ENCODE measurements at regions of chr5 and their contacts with region 1.

Region 1: DNA sequence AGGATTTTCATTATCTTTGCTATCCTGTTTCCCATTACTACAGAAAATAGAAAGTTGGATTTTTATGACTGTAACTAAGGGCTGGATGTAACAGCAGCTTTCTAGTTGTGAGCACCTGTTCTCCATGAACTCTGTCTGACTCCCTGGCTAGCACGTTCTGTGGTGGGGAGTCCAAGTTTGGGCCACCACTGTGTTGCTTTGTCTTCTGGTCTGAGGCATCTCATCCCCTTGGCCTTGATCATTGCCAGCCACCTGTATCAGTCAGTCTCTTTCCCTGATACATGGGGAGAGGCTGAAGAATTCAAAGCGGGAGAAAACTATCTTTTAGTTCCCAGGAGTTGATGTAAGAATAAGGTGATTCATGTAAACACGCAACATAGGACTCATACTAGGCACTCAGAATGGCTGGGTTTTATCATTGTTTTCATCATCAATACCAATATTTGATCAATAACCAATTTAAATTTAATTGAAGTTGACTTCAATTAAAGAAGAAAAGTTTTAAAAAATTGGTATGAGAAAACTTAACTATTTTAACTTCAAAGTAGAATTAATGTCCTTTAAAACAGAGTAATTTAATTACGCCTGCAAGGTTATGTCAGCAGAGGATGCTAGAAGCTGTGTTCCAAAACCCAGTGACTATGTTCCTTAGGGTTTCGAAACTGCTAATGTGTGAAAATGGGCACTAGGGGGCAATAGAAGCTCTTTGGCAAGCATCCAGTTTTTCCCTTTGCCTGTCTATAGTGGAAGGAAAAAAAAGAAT is 33.6 kb downstream of the WDR70 start:
- DNase-seq: peak; percentile 42
- H3K4me3 Mint-ChIP-seq: no peak overlapping the region
- H3K27ac Mint-ChIP-seq: no peak overlapping the region
- H3K4me1 Mint-ChIP-seq: no peaks in the 10 kb centered on the region
- H3K27me3 Mint-ChIP-seq: no peaks in the 10 kb centered on the region

Region 2: GRCh38 chr5:37424441-37424840 is 11.7 kb after region 1 on chr5:
- CTCF ChIA-PET with region 1: interaction called, 20 read pairs
- POLR2A ChIA-PET with region 1: interaction called, 3 read pairs
- intact Hi-C with region 1: no loop called
- DNase-seq: no peak
- H3K4me3 Mint-ChIP-seq: no peak overlapping the region
- H3K27ac Mint-ChIP-seq: no peak overlapping the region
- H3K4me1 Mint-ChIP-seq: peaks cover 3% of the 10 kb centered on the region
- H3K27me3 Mint-ChIP-seq: no peaks in the 10 kb centered on the region

Region 3: DNA sequence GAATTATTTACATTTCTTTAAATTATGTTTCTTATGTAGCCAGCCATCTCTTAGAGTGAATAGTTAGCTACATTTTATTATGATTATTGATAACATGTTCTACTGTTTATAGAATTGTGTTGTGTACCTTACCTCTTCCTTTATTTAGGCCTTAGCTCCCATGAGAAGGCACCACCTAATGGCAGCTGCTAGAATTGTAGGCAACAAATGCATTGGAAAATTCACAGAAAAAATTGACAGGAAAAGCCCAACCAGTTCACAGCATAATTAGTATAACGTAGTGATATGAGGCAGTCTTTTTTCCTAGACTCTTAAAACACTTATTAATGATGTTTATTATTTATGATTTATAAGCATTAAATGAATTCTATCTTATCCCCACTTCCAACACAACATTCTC is 142.2 kb after region 1 on chr5:
- CTCF ChIA-PET with region 1: interaction called, 8 read pairs
- POLR2A ChIA-PET with region 1: no interaction called
- intact Hi-C with region 1: loop called (anchors 1 kb)
- DNase-seq: no peak
- H3K4me3 Mint-ChIP-seq: no peak overlapping the region
- H3K27ac Mint-ChIP-seq: no peak overlapping the region
- H3K4me1 Mint-ChIP-seq: peaks cover 5% of the 10 kb centered on the region
- H3K27me3 Mint-ChIP-seq: no peaks in the 10 kb centered on the region

Region 4: GRCh38 chr5:37837414-37838032 is 424.8 kb after region 1 on chr5:
- CTCF ChIA-PET with region 1: interaction called, 4 read pairs
- POLR2A ChIA-PET with region 1: no interaction called
- intact Hi-C with region 1: loop called (anchors 1 kb)
- DNase-seq: peak; percentile 86
- H3K4me3 Mint-ChIP-seq: peak overlapping the region; percentile 35
- H3K27ac Mint-ChIP-seq: no peak overlapping the region
- H3K4me1 Mint-ChIP-seq: peaks cover 27% of the 10 kb centered on the region
- H3K27me3 Mint-ChIP-seq: peaks cover 81% of the 10 kb centered on the region

Region 5: DNA sequence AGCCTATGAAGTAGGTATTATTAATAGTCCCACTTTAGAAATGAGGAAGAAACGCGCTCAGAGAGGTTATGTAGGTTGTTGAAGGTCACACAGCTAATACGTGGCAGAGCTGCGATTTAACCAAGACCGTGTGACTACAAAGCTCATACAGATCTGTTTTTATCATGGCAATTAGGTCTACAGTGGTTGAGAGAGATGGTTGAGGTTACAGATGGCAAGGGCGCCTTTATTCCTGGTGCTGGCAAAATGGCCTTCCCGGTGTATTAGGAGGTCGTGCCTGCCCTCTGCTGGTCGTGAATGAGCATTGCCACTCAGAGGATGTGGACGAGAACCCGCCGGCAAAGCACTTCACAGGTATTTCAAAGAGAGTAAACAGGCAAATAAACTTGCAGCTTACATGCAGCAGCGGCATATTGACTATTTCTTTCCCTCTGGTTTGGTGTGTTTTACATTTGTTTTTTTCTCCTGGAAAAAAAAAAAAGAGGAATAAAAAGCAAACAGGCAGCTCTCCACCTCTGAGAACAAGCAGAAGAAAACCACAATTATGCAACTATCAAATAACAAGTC is 780.4 kb after region 1 on chr5:
- CTCF ChIA-PET with region 1: interaction called, 29 read pairs
- POLR2A ChIA-PET with region 1: no interaction called
- intact Hi-C with region 1: loop called (anchors 1 kb)
- DNase-seq: peak; percentile 74
- H3K4me3 Mint-ChIP-seq: no peak overlapping the region
- H3K27ac Mint-ChIP-seq: no peak overlapping the region
- H3K4me1 Mint-ChIP-seq: no peaks in the 10 kb centered on the region
- H3K27me3 Mint-ChIP-seq: peaks cover 19% of the 10 kb centered on the region

Measured in activated CD4-positive, alpha-beta memory T cell treated with anti-CD3 and anti-CD28 coated beads for 36 hours (primary cell).